Activated T-helper 1 cell treated with anti-CD3 and anti-CD28 coated beads, Interleukin-12 subunit alpha, Interleukin-12 subunit beta, Interleukin-2, Interleukin-4 antibody, amounts not matched to agents 30 ng/mL and 10 ng/mL and 1 ng/mL, durations not matched to agents 14 hours and 24 hours and 36 hours (primary cell): ENCODE measurements at regions of chr22 and their contacts with region 1.

Region 1: DNA sequence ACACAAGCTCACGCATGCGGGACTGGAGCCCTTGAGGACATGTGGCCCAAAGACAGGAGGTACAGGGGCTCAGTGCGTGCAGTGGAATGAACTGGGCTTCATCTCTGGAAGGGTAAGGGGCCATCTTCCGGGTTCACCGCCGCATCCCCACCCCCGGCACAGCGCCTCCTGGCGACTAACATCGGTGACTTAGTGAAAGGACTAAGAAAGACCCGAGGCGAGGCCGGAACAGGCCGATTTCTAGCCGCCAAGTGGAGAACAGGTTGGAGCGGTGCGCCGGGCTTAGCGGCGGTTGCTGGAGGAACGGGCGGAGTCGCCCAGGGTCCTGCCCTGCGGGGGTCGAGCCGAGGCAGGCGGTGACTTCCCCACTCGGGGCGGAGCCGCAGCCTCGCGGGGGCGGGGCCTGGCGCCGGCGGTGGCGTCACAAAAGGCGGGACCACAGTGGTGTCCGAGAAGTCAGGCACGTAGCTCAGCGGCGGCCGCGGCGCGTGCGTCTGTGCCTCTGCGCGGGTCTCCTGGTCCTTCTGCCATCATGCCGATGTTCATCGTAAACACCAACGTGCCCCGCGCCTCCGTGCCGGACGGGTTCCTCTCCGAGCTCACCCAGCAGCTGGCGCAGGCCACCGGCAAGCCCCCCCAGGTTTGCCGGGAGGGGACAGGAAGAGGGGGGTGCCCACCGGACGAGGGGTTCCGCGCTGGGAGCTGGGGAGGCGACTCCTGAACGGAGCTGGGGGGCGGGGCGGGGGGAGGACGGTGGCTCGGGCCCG is at the start of gene MIF:
- DNase-seq: peak; percentile 99
- H3K4me3 Mint-ChIP-seq: peak within 1 kb of the TSS; percentile 98
- H3K27ac Mint-ChIP-seq: peak within 1 kb of the TSS; percentile 99
- H3K4me1 Mint-ChIP-seq: peaks cover 22% of the 10 kb centered on the region
- H3K27me3 Mint-ChIP-seq: no peaks in the 10 kb centered on the region
- total RNA-seq, gene MIF: 1,136 and 1,212 TPM in 2 replicates

Region 2: GRCh38 chr22:23857606-23858483 is 36.3 kb before region 1 on chr22 and contains the start of gene SLC2A11:
- intact Hi-C with region 1: loop called (anchors 2 kb)
- DNase-seq: peak; percentile 93
- H3K4me3 Mint-ChIP-seq: peak within 1 kb of the TSS; percentile 88
- H3K27ac Mint-ChIP-seq: peak within 1 kb of the TSS; percentile 75
- H3K4me1 Mint-ChIP-seq: peaks cover 21% of the 10 kb centered on the region
- H3K27me3 Mint-ChIP-seq: peaks cover 4% of the 10 kb centered on the region
- total RNA-seq, gene SLC2A11: 8.3 and 8.4 TPM in 2 replicates